ENCODE measurements at regions of chr5 and their contacts with region 1.

Region 1: GRCh38 chr5:71782771-71783770 is 64.0 kb downstream of the CARTPT start:
- DNase-seq: peak; percentile 90
- H3K4me3 Mint-ChIP-seq: peak overlapping the region; percentile 37
- H3K27ac Mint-ChIP-seq: peak overlapping the region; percentile 52
- H3K4me1 Mint-ChIP-seq: peaks cover 25% of the 10 kb centered on the region
- H3K27me3 Mint-ChIP-seq: peaks cover 9% of the 10 kb centered on the region

Region 2: DNA sequence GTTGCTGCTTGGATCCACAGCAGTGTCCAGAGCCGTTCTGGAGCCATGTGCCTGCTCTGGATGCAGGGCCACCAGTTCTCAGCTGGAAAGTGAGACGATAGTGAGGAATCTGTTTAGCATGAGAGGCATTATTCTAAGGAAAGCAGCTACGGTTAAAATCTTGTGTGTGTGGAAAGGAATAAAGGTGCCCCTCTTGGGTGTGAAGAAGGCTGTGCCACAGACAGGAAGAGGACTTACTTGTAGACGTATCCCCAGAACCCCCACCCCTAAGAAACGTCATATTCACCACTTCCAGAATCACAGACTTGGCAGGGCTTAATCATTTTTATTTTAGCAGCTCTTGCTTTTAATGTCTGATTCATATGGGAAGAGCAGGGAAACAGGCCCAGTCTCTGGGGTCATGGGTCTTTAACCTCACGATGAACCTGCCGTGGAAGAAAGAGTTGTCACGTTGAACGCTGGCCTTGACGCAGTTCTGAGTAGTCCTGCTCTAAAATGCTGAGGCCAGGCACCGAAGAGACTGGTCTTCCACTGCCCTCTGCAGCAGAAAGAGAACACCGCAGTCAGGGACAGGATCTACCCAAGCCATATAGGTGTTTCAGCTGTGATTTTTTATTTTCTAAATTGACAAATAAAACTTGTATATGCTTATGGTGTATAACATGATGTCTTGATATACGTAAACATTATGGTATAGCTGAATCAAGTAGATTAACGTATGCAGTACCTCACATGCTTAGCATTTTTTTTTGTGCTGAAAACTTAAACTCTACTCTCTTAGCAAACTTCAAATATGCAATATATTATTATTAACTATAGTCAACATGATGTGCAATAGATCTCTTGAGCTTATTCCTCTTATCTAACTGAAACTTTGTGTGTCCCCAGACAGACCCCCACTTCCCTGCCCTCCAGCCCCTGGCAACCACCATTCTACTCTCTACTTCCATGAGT is 25.2 kb before region 1 on chr5:
- CTCF ChIA-PET with region 1: no interaction called
- intact Hi-C with region 1: no loop called
- DNase-seq: peak; percentile 75
- H3K4me3 Mint-ChIP-seq: no peak overlapping the region
- H3K27ac Mint-ChIP-seq: no peak overlapping the region
- H3K4me1 Mint-ChIP-seq: peaks cover 6% of the 10 kb centered on the region
- H3K27me3 Mint-ChIP-seq: peaks cover 3% of the 10 kb centered on the region

Region 3: DNA sequence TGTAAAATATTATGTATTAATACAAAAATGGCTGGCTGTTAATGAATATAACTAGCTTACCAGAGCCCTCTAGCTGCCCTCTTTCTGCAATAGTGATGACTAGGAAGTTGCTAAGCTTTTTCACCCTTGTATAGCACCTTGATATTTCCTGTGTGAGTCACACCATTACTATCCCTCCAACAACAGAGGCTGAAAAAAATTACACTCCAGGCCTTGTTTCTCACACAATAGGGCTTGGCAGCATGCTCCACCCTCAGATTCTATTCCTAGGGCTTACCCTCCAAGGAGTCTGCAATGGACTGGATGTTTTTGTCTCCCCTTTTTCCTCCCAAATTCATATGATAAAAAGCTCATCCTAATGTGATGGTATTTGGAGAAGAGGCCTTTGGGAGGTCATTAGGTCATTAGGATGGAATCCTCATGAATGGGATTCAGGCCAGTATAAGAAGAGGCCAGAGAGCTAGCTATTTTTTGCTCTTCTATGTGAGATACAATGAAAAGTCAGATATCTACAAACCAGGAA is 139.6 kb after region 1 on chr5:
- CTCF ChIA-PET with region 1: interaction called, 3 read pairs
- intact Hi-C with region 1: loop called (anchors 5 kb)
- DNase-seq: no peak
- H3K4me3 Mint-ChIP-seq: no peak overlapping the region
- H3K27ac Mint-ChIP-seq: no peak overlapping the region
- H3K4me1 Mint-ChIP-seq: no peaks in the 10 kb centered on the region
- H3K27me3 Mint-ChIP-seq: peaks cover 6% of the 10 kb centered on the region

Region 4: DNA sequence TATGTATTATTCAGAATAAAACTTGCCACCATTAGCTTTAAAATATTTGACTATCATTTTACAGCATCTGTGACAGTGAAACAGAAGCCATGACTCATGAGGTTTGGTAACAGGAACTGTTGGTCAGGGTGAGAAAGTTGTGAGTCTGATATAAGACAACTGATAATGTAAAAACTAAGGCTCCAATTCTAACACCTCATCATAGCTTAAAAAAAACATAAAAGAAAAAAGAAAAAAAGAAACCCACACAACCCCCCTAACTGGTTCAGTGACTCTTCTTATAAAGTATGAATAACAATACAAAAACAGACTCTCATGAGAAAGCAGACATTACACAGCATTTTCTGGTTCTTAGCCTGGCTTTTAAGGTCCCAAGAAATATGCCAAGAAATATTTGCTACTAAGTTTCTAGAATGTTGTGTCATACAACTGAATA is 451.2 kb after region 1 on chr5:
- CTCF ChIA-PET with region 1: no interaction called
- intact Hi-C with region 1: loop called (anchors 1 kb)
- DNase-seq: peak; percentile 47
- H3K4me3 Mint-ChIP-seq: no peak overlapping the region
- H3K27ac Mint-ChIP-seq: peak overlapping the region; percentile 30
- H3K4me1 Mint-ChIP-seq: peaks cover 46% of the 10 kb centered on the region
- H3K27me3 Mint-ChIP-seq: no peaks in the 10 kb centered on the region

Region 5: GRCh38 chr5:72307968-72308852 is 525.1 kb after region 1 on chr5:
- CTCF ChIA-PET with region 1: interaction called, 3 read pairs
- intact Hi-C with region 1: loop called (anchors 1 kb)
- DNase-seq: peak; percentile 94
- H3K4me3 Mint-ChIP-seq: peak overlapping the region; percentile 85
- H3K27ac Mint-ChIP-seq: peak overlapping the region; percentile 92
- H3K4me1 Mint-ChIP-seq: peaks cover 32% of the 10 kb centered on the region
- H3K27me3 Mint-ChIP-seq: no peaks in the 10 kb centered on the region

Region 6: DNA sequence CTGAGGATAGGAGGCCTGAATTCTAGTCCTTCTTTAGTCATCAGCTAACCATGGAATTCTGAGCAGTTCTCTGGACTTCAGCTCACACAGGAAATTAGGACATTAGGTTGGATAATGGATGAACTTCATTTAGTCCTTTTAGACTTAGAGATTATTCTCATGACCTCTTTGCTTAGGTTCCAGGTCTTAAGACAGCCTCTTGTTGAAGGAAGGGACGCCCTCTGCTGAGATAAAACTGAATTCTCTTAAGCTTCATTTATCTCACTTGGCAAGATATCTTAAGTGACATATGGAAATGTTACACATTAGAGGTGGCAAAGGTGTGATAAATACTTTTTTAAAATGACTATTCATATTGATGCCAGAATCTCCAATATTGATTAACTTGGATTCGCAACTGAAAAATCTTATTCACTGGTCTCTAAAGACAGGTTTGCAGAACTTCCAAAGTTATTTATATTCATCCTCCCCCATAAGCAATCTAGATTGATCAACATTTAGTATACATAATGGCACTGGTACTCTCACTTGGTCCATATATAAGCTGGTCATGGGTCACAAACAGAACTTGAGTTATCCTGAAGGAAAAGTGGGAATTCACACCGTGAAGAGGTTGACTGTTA is 741.0 kb after region 1 on chr5:
- CTCF ChIA-PET with region 1: no interaction called
- intact Hi-C with region 1: loop called (anchors 10 kb)
- DNase-seq: no peak
- H3K4me3 Mint-ChIP-seq: no peak overlapping the region
- H3K27ac Mint-ChIP-seq: no peak overlapping the region
- H3K4me1 Mint-ChIP-seq: no peaks in the 10 kb centered on the region
- H3K27me3 Mint-ChIP-seq: no peaks in the 10 kb centered on the region

Measured in activated naive CD4-positive, alpha-beta T cell treated with anti-CD3 and anti-CD28 coated beads for 36 hours (primary cell).